ENCODE measurements at regions of chr2 and their contacts with region 1.

Region 1: GRCh38 chr2:197705121-197705911 is at the start of gene MARS2:
- DNase-seq: peak; percentile 96 to 97
- ATAC-seq: peak; percentile 94 to 98 (median 96)
- H3K4me3 ChIP-seq: peak within 1 kb of the TSS; percentile 97
- H3K27ac ChIP-seq: peak within 1 kb of the TSS; percentile 90
- H3K4me1 ChIP-seq: peaks cover 22% of the 10 kb centered on the region
- H3K27me3 ChIP-seq: no peaks in the 10 kb centered on the region
- CTCF ChIP-seq: no peak
- total RNA-seq, gene MARS2: 5.9 to 12.6 (median 7.3) TPM

Region 2: GRCh38 chr2:197786010-197786877 is 80.9 kb after region 1 on chr2:
- intact Hi-C with region 1: loop called in 1 of 2 experiments (anchors 5 kb)
- DNase-seq: peak; percentile 80 to 92
- ATAC-seq: peak; percentile 95 to 98 (median 96)
- H3K4me3 ChIP-seq: peak overlapping the region; percentile 75
- H3K27ac ChIP-seq: peak overlapping the region; percentile 93
- H3K4me1 ChIP-seq: no peaks in the 10 kb centered on the region
- H3K27me3 ChIP-seq: no peaks in the 10 kb centered on the region
- CTCF ChIP-seq: peak; percentile 66